Thyroid gland (tissue), 4 donors: ENCODE measurements at regions of chr11 and their contacts with region 1.

Region 1: DNA sequence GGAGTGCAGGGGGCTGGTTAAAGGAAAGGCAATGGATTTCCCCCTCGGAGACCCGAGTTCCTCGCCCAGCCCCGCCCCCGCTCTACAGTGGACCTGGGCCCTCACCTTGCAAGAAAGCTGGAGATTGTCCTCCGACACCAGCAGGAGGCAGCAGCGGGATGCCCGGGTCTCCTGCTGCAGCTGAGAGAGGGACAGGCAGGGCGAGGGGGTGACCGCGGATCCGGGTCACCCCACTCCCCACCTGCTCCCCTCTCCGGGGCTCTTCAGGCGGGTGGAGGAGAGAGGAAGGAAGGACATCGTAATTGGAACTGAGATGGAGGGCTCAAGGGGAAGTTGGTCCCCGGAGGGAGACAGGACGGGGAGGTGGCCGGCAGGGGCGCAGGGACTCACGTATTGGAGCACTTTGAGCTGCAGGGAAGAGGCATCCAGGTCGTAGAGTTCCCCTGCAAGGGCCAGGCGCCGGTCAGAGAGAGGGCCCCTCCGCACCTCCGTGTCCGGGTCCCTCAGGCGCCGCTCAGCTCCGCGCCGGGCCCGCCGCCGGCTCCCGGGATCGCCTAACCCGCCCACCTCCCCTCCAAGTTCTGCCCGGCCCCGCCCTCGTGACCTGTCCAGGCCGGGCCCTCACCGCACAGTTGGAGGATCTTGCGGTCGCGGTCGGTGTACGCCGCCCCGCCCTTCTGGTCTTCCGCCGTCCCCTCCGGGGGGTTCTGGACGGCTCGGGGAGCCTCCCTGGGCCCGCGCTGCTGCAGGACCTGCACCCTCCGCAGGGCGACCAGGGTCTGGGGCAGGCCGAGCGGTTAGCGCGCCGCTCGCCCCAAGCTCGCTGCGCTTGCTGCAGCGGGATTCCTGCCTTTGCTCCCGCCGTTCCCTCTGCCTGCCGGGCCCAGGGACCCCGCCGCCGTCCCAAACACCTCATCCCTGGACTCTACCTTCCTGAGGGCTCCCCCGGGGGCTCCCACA is 84.1 kb downstream of the PDE2A start:
- DNase-seq: peak; percentile 40 to 46
- H3K4me3 ChIP-seq: peak overlapping the region in 1 of 3 donors; percentile 1
- H3K27ac ChIP-seq: no peak overlapping the region
- H3K4me1 ChIP-seq: peaks cover 7 to 18% of the 10 kb centered on the region in 2 donors
- H3K27me3 ChIP-seq: no peaks in the 10 kb centered on the region
- CTCF ChIP-seq: peak in 4 of 6 experiments; percentile 9 to 47 (median 32)
- POLR2A ChIP-seq: no peak

Region 2: DNA sequence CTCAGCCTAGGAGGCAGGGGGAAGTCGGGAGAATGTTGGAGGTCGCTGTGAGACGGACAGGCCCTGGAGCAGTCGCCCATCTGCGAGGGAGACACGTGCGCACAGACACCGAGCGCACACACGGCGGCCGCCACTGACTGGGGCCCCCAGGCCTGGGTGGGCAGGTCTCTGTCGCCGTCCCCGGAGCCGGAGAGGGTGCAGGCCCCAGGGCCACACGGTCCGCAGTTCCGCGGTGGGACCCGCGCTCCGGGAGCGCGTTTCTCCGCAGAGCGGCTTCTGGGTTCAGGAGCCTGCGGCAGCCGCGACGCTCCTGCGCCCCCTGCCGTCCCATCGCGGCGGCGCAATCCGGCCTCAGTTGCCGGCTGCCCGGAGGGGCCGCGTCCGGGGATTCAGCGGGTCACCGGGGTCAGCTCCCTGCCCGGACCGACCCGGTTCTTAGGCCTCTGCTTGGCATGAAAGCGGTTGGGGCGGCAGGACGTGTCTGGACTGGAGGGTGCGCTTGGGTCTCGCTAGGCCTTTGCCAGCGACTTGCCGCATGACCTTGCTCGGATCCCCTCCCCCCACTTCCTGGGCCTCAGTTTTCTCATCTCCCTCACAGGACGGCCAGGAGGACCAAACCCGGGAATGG is 52.9 kb after region 1 on chr11:
- intact Hi-C with region 1: loop called (anchors 2 kb)
- DNase-seq: peak; percentile 29
- H3K4me3 ChIP-seq: peak overlapping the region in 2 of 3 donors; percentile 49 to 50
- H3K27ac ChIP-seq: no peak overlapping the region
- H3K4me1 ChIP-seq: peaks cover 11% of the 10 kb centered on the region in 2 donors
- H3K27me3 ChIP-seq: no peaks in the 10 kb centered on the region
- CTCF ChIP-seq: peak; percentile 55 to 96 (median 88)
- POLR2A ChIP-seq: no peak

Region 3: DNA sequence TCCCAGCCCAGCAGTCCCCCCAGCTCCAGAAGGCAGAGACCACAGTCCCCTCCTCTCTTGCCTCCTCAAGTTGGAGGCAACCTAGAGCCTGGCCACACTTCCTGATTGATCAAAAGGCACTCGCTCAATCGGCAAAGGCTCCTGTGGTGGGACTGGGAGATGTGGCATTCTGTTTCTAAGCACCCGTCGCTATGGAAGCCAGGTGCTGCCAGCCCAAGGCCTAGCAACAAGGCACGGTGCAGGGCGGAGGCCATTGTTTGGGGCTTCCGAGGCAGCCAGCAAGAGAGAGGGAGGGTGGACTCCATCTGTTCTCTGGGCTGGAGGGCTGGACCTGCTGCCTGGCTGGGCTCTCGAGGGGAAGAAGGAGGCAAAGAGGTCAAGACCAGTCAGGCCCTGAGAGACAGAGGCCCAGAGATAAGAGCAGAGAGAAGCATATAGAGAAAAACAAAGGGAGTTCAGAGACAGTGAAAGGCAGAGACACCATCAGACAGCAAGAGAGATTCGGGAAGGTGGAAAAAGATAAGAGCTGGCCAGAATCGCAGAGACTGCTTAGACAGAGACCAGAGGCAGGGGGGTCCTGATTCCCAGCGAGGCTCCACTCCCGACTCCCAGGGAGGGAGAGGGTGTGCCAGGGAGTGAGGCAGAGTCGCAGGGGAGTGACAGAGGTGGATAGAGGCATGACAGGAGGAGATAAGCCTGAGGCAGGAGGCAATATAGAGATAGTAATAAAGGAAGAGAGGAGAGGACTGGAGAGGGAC is 63.0 kb after region 1 on chr11:
- intact Hi-C with region 1: no loop called
- DNase-seq: no peak
- H3K4me3 ChIP-seq: no peak overlapping the region
- H3K27ac ChIP-seq: no peak overlapping the region
- H3K4me1 ChIP-seq: no peaks in the 10 kb centered on the region
- H3K27me3 ChIP-seq: no peaks in the 10 kb centered on the region
- CTCF ChIP-seq: no peak
- POLR2A ChIP-seq: no peak